ENCODE measurements at regions of chr5 and their contacts with region 1.

Region 1: DNA sequence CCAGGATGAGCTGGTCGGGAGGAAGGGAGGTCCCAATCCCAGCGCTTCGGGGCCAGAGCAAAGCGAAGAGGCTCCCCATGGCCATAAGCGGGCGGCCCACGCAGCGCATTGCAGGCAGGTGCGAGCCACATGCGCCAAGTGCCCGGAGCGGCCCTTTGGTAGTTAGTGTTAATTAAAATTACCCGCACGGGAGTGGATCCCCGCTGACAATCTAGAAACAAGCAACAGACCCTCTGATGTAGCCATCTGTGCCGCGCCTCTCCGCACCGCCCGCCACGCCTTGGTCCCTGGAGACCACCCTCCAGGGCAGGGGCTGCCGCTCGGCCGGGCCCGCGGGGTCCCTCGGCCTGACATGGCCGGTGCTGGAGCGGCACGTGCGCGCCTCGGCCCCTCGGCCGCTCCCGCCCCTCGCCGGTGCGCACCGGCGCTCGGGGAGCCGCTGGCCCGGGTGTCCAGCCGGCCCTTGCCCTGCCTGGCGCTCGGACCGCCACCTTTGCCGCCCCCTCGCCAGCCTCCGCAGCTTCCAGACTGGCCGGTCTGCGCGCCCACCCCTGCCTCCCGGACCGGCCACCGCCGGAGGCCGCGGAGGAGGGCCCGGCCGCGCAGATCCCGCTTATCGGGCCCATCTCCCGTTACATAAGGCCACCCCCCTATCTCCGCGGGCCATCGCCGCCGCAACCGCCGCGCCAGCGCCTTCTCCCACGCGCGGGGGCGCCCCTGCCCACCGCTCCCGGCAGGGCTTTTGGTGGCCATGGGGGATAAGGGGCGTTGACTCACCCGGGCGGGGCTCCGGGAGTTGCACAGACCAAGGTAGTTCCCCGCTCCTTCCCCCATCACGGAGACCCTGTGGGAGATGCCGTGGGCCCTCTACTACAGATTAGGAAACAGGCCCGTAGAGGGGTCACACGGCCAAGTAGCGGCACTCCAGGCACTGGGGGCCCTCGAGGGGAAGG is 1.9 kb upstream of the IL13 start:
- DNase-seq: peak; percentile 80
- H3K4me3 Mint-ChIP-seq: peak overlapping the region; percentile 78
- H3K27ac Mint-ChIP-seq: peak overlapping the region; percentile 87
- H3K4me1 Mint-ChIP-seq: peaks cover 48% of the 10 kb centered on the region
- H3K27me3 Mint-ChIP-seq: peaks cover 21% of the 10 kb centered on the region

Region 2: DNA sequence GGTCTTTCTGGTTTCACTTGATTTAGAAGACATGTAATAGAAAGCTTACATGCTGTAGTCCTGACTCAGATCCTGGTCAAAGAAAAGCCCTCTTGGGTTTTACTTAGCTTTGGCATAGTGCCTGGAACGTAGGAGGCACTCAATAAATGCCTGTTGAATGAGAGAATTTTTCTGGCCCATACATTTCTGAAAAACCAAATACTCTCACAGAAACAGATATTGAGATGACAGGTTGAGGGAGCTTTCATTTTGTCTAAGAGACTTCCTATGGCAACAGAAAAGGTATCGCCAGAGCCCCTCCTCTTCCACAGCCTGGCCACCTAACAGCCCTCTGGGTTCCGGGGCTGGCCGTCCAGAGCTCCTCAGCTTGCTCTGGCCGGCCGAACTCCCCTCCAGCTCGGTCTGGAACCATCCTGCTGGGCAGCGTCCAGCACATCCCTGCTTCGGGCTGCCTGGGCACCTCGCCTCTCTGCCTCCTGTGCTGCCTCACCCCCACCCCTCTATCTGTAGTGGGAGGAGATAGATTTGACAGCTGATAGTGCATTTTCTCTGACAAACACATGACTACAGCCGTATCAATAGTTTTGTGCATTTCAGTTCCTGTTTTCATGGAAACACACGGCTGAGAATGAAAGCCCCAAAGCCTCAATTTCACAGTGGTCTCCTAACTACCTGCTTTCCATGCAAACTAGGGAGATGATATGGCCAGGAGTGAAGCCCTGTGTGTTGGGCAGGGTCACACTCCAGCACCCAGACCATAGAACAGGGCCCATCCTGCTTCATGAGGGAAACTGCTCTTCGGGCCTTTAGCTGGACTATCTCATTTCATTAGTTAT is 18.8 kb after region 1 on chr5:
- intact Hi-C with region 1: loop called (anchors 2 kb)
- DNase-seq: no peak
- H3K4me3 Mint-ChIP-seq: peak overlapping the region; percentile 60
- H3K27ac Mint-ChIP-seq: peak overlapping the region; percentile 86
- H3K4me1 Mint-ChIP-seq: peaks cover 33% of the 10 kb centered on the region
- H3K27me3 Mint-ChIP-seq: no peaks in the 10 kb centered on the region

Region 3: DNA sequence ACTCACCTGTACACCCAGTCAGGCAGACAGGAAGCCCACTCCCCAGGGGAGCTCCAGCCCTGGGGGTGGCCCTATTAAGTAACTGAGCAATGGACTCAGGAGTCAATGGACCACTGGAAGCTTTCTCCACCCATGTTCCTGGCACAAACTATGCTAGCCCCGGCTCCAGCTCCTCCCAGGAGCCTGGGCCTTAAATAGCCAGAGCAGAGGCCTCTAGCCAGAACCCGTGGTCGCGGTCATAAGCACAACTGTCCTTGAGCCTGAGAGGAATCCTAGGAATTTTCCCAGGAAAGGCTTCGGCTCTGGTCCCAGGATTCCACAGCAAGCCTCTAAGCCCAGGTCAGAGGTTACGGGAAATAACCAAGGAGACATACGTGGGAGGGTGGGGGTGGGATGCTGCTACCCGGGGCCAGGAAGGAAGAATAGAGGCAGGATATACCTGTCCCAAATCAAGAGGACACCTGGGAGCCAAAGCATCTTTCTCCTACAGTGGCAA is 115.5 kb after region 1 on chr5:
- intact Hi-C with region 1: no loop called
- DNase-seq: no peak
- H3K4me3 Mint-ChIP-seq: no peak overlapping the region
- H3K27ac Mint-ChIP-seq: no peak overlapping the region
- H3K4me1 Mint-ChIP-seq: peaks cover 18% of the 10 kb centered on the region
- H3K27me3 Mint-ChIP-seq: peaks cover 4% of the 10 kb centered on the region